Dendritic cell treated with granulocyte-macrophage colony-stimulating factor and Interleukin-4, amounts not matched to agents 40 ng/mL and 50 ng/mL, for 4 days (primary cell): ENCODE measurements at regions of chr3 and their contacts with region 1.

Region 1: GRCh38 chr3:160941885-160942494 is 163.2 kb downstream of the B3GALNT1 start:
- H3K4me3 Mint-ChIP-seq: no peak overlapping the region
- H3K27ac Mint-ChIP-seq: no peak overlapping the region
- H3K4me1 Mint-ChIP-seq: no peaks in the 10 kb centered on the region
- H3K27me3 Mint-ChIP-seq: no peaks in the 10 kb centered on the region

Region 2: GRCh38 chr3:160686955-160687535 is 254.9 kb before region 1 on chr3:
- intact Hi-C with region 1: loop called (anchors 5 kb)
- H3K4me3 Mint-ChIP-seq: no peak overlapping the region
- H3K27ac Mint-ChIP-seq: no peak overlapping the region
- H3K4me1 Mint-ChIP-seq: peaks cover 5% of the 10 kb centered on the region
- H3K27me3 Mint-ChIP-seq: no peaks in the 10 kb centered on the region

Region 3: DNA sequence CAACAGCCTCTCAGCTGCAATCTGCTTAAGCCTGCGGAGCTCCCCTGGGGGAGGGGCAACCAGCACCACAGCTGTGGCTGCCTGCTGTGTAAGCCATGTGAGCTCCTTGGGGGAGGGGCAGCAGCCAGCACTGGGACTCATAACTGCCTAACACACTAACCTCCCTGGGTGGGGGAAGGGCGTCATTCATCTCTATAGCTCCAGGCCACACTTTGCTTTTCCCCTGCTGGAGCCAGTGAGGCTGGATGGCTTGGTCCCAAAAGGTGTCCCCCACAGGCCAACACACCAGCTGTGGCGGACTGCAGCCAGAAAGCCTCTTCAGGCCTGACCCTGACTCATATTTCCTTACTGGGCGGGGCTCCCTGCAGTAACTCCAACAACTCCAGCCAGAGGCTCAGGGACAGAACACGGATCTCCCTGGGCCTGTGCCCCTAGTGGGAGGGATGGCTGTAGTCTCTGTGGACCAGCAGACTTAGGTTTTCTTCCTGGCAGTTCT is 56.2 kb before region 1 on chr3:
- intact Hi-C with region 1: no loop called
- H3K4me3 Mint-ChIP-seq: no peak overlapping the region
- H3K27ac Mint-ChIP-seq: no peak overlapping the region
- H3K4me1 Mint-ChIP-seq: peaks cover 24% of the 10 kb centered on the region
- H3K27me3 Mint-ChIP-seq: no peaks in the 10 kb centered on the region

Region 4: GRCh38 chr3:161171113-161171512 is 229.1 kb after region 1 on chr3:
- intact Hi-C with region 1: no loop called
- H3K4me3 Mint-ChIP-seq: no peak overlapping the region
- H3K27ac Mint-ChIP-seq: no peak overlapping the region
- H3K4me1 Mint-ChIP-seq: peaks cover 10% of the 10 kb centered on the region
- H3K27me3 Mint-ChIP-seq: no peaks in the 10 kb centered on the region

Region 5: DNA sequence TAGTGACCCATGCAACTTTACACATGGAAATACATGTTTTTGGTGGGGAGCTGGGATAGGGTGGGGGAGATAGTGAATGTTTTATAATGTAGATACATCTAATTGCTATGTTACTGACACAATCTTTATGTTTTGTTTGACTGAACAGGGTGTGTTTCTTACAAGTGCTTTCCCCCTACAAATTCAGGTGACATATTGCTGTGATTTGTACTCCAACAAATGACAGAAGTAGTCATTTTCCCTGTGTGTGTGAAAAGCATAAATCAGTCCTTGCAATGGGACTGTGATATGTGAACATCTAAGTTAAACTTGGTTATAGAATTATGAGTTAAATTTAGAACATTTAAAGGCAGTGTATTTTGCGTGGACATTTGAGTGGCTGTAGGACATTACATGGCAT is 581.9 kb after region 1 on chr3:
- intact Hi-C with region 1: no loop called
- H3K4me3 Mint-ChIP-seq: no peak overlapping the region
- H3K27ac Mint-ChIP-seq: no peak overlapping the region
- H3K4me1 Mint-ChIP-seq: no peaks in the 10 kb centered on the region
- H3K27me3 Mint-ChIP-seq: peaks cover 3% of the 10 kb centered on the region